Esophagus muscularis mucosa (tissue), 4 donors: ENCODE measurements at regions of chr18 and their contacts with region 1.

Region 1: DNA sequence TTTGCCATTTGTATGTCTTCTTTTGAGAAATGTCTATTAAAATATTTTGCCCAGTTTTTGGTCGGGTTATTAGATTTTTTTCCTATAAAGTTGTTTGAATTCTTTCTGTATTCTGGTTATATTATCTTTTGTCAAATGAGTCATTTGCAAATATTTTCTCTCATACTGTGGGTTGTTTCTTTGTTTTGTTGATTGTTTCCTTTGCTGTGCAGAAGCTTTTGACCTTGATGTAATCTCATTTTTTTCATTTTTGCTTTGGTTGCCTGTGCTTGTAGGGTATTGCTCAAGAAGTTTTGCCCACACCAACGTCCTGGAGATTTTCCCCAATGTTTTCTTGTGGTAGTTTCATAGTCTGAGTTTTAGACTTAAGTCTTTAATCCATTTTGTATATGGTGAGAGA is 245.7 kb downstream of the ADCYAP1 start:
- DNase-seq: no peak
- H3K4me3 ChIP-seq: no peak overlapping the region
- H3K27ac ChIP-seq: no peak overlapping the region
- H3K4me1 ChIP-seq: no peaks in the 10 kb centered on the region
- H3K27me3 ChIP-seq: no peaks in the 10 kb centered on the region
- CTCF ChIP-seq: no peak
- EP300 ChIP-seq: no peak
- POLR2A ChIP-seq: no peak

Region 2: GRCh38 chr18:1213126-1213525 is 62.8 kb after region 1 on chr18:
- intact Hi-C with region 1: loop called (anchors 10 kb)
- DNase-seq: no peak
- H3K4me3 ChIP-seq: no peak overlapping the region
- H3K27ac ChIP-seq: no peak overlapping the region
- H3K4me1 ChIP-seq: no peaks in the 10 kb centered on the region
- H3K27me3 ChIP-seq: no peaks in the 10 kb centered on the region
- CTCF ChIP-seq: no peak
- EP300 ChIP-seq: no peak
- POLR2A ChIP-seq: no peak

Region 3: GRCh38 chr18:1244397-1245122 is 94.2 kb after region 1 on chr18:
- intact Hi-C with region 1: no loop called
- DNase-seq: no peak
- H3K4me3 ChIP-seq: no peak overlapping the region
- H3K27ac ChIP-seq: no peak overlapping the region
- H3K4me1 ChIP-seq: no peaks in the 10 kb centered on the region
- H3K27me3 ChIP-seq: no peaks in the 10 kb centered on the region
- CTCF ChIP-seq: no peak
- EP300 ChIP-seq: no peak
- POLR2A ChIP-seq: no peak